ENCODE measurements at regions of chr1 and their contacts with region 1.

Region 1: GRCh38 chr1:211133836-211134669 is at the start of gene KCNH1:
- DNase-seq: peak; percentile 73 to 93
- ATAC-seq: peak; percentile 92
- H3K4me3 ChIP-seq: peak within 1 kb of the TSS; percentile 4 to 6
- H3K27ac ChIP-seq: no peak within 1 kb of the TSS
- H3K4me1 ChIP-seq: no peaks in the 10 kb centered on the region
- H3K27me3 ChIP-seq: no peaks in the 10 kb centered on the region
- total RNA-seq, gene KCNH1: 0.19 to 0.96 TPM

Region 2: GRCh38 chr1:210407207-210407886 is 726.7 kb before region 1 on chr1:
- intact Hi-C with region 1: loop called (anchors 2 to 5 kb)
- DNase-seq: peak; percentile 60 to 89
- ATAC-seq: peak; percentile 74
- H3K4me3 ChIP-seq: no peak overlapping the region
- H3K27ac ChIP-seq: no peak overlapping the region
- H3K4me1 ChIP-seq: no peaks in the 10 kb centered on the region
- H3K27me3 ChIP-seq: no peaks in the 10 kb centered on the region

Region 3: DNA sequence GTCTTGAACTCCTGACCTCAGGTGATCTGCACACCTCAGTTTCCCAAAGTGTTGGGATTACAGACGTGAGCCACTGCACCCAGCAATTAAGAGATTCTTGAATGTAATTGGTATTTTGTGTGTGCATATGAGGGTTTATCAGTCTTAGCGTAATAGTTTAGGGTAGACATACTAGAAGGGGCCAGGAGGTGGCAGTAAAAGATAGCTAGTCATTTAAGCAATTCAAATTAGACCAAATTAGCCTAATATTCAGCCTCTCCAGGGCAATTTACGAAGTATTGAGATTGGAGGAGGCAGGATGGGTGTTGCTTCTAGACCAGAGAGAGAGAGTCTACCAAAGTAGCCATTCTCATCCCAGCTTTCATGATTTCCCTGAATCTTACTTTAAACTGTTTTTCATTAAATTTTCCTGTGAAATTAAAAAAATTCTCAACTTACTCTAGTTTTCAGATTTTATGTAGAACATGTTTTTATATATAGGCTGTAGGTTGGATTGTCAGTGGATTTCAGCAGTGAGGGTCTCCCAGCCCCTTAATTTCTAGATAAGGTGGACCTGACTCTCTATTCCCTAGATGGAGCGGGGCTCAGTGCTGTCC is 685.7 kb before region 1 on chr1:
- intact Hi-C with region 1: loop called (anchors 5 to 10 kb)
- DNase-seq: no peak
- ATAC-seq: no peak
- H3K4me3 ChIP-seq: no peak overlapping the region
- H3K27ac ChIP-seq: no peak overlapping the region
- H3K4me1 ChIP-seq: no peaks in the 10 kb centered on the region
- H3K27me3 ChIP-seq: no peaks in the 10 kb centered on the region

Region 4: GRCh38 chr1:210584439-210585113 is 549.5 kb before region 1 on chr1:
- intact Hi-C with region 1: loop called (anchors 2 to 5 kb)
- DNase-seq: peak; percentile 79 to 87
- ATAC-seq: peak; percentile 66
- H3K4me3 ChIP-seq: no peak overlapping the region
- H3K27ac ChIP-seq: no peak overlapping the region
- H3K4me1 ChIP-seq: no peaks in the 10 kb centered on the region
- H3K27me3 ChIP-seq: no peaks in the 10 kb centered on the region

Region 5: GRCh38 chr1:211174375-211174774 is 40.3 kb after region 1 on chr1:
- intact Hi-C with region 1: no loop called
- DNase-seq: no peak
- ATAC-seq: no peak
- H3K4me3 ChIP-seq: no peak overlapping the region
- H3K27ac ChIP-seq: no peak overlapping the region
- H3K4me1 ChIP-seq: no peaks in the 10 kb centered on the region
- H3K27me3 ChIP-seq: no peaks in the 10 kb centered on the region

Measured in aorta (tissue), 5 donors.